Ascending aorta (tissue), 2 donors: ENCODE measurements at regions of chr3 and their contacts with region 1.

Region 1: DNA sequence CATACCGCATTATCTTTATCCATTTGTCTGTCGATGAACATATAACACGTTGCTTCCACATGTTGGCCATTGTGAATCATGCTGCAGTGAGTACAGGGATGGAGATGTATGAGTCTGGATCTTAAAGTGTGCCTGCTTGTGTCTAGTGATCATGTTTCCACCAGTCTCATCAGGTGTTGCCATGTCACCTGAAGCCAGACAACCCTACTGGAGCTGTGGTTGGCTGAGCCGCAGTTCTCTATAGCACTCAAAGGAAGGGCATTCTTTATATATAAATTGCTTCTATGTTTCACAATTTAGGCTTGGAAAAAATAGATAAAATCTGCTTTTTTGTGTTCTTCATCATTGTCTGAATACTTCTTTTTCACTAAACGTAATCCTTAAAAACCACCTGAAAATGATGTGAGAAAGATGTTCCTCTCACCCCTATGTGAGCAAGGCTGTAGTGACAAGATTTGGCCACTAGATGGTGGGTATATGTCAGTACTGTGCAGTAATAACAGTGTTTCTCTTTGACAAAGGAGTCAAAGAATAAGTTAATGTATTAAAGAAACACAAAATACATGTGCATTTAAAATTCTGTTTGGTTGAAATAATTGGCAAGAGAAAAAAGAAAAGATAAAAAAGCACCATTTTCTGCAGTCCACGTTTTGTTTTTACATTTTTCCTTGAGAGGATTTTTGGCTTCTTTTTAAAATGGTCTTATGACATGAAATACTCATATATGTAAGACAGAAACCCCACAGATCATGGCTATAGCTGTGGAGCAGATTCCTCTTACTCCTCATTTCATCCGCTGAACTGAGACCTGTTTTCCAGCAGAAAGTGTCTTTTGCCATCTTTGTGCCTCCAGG is 394.5 kb upstream of the DPPA4 start:
- DNase-seq: peak in 1 of 2 donors; percentile 67
- H3K4me3 ChIP-seq: no peak overlapping the region
- H3K27ac ChIP-seq: no peak overlapping the region
- H3K4me1 ChIP-seq: no peaks in the 10 kb centered on the region
- H3K27me3 ChIP-seq: no peaks in the 10 kb centered on the region
- CTCF ChIP-seq: peak; percentile 66 to 84 (median 76)

Region 2: GRCh38 chr3:110314512-110315114 is 582.8 kb after region 1 on chr3:
- intact Hi-C with region 1: loop called (anchors 10 kb)
- DNase-seq: peak in 1 of 2 donors; percentile 73
- H3K4me3 ChIP-seq: no peak overlapping the region
- H3K27ac ChIP-seq: no peak overlapping the region
- H3K4me1 ChIP-seq: no peaks in the 10 kb centered on the region
- H3K27me3 ChIP-seq: no peaks in the 10 kb centered on the region
- CTCF ChIP-seq: peak in 2 of 3 experiments; percentile 56 to 67

Region 3: GRCh38 chr3:111080413-111080812 is 1348.6 kb after region 1 on chr3:
- intact Hi-C with region 1: loop called (anchors 5 kb)
- DNase-seq: no peak
- H3K4me3 ChIP-seq: no peak overlapping the region
- H3K27ac ChIP-seq: no peak overlapping the region
- H3K4me1 ChIP-seq: peaks cover 0 to 9% of the 10 kb centered on the region in 2 donors
- H3K27me3 ChIP-seq: no peaks in the 10 kb centered on the region
- CTCF ChIP-seq: peak in 2 of 3 experiments; percentile 38 to 64

Region 4: DNA sequence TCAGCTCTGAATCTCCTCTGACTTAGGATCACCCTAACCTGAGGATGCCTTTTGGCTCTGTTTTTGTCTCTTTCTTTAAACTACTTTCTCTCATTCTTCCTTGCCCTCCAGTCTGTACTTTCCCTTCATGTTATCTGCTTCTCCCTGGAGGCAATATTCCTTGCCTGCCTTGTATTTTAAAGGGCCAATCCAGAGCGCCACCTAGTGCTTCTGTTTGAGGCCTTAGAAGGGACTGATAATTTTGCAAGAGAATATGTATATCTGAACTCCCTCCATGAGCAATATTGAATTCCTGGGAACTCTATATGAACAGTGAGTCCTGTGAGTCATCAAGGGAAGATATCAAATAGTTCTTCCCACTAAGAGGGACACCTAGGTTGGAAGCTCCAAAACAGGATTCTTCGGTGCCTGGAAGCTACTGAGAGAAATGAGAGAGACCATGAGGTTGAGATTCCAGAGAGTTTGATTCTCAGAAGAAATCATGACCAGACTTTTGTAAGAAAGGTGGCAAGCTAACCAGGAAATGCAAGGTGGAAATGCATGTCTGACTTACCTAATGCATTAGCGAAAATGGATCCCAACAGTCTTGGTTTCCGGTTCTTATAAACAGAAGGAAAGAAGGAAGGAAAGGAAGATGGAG is 1606.3 kb after region 1 on chr3:
- intact Hi-C with region 1: loop called (anchors 10 kb)
- DNase-seq: no peak
- H3K4me3 ChIP-seq: no peak overlapping the region
- H3K27ac ChIP-seq: no peak overlapping the region
- H3K4me1 ChIP-seq: no peaks in the 10 kb centered on the region
- H3K27me3 ChIP-seq: no peaks in the 10 kb centered on the region
- CTCF ChIP-seq: peak in 2 of 3 experiments; percentile 14 to 35